ENCODE measurements at regions of chr6 and their contacts with region 1.

Region 1: GRCh38 chr6:147285087-147285855 is 81.1 kb downstream of the STXBP5 start:
- DNase-seq: peak; percentile 48
- H3K4me3 ChIP-seq: no peak overlapping the region
- H3K27ac ChIP-seq: no peak overlapping the region
- H3K4me1 ChIP-seq: no peaks in the 10 kb centered on the region
- H3K27me3 ChIP-seq: no peaks in the 10 kb centered on the region
- CTCF ChIP-seq: peak; percentile 64

Region 2: DNA sequence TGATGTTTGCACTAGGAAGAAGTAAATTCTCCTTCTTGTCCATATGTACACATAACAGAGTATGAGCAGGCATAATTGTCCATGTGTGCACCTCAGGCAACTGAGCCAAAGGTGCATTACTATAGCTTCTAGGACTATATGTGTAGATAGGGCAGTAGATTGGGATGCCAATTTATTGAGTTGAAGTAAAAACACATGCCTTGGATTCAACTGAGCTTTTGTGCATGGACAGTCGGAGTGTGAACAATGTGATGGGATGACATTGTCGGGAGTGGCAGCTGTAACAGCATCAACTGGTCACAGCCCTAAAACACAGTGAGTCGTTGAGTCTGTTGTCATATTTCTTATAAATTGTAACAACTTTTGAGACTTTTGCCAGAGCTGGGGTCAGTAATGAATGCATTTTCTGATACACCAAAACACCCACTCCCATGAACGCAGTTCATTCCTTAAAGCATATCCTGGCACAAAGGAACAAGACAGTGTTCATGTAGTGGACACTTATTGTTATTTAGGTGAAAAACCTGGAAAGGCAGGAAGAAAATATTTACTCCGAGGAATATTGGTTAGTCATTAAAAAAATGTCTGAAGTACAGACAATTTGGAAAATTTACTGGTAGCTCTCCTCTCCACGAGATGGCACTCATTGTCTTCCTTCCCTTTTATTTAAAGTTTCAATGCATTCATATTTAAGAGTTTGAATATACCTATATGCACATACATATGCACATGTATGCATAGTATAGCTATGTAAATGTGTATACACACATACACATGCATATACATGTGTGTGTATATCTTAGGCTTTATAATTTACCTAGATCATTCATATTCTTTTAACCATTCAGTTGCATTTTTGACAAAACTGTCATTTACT is 383.1 kb before region 1 on chr6:
- CTCF ChIA-PET with region 1: no interaction called
- POLR2A ChIA-PET with region 1: no interaction called
- intact Hi-C with region 1: loop called (anchors 2 kb)
- DNase-seq: no peak
- H3K4me3 ChIP-seq: no peak overlapping the region
- H3K27ac ChIP-seq: no peak overlapping the region
- H3K4me1 ChIP-seq: no peaks in the 10 kb centered on the region
- H3K27me3 ChIP-seq: no peaks in the 10 kb centered on the region
- CTCF ChIP-seq: peak; percentile 52

Region 3: GRCh38 chr6:147298461-147298860 is 13.2 kb after region 1 on chr6:
- CTCF ChIA-PET with region 1: no interaction called
- POLR2A ChIA-PET with region 1: no interaction called
- intact Hi-C with region 1: no loop called
- DNase-seq: no peak
- H3K4me3 ChIP-seq: no peak overlapping the region
- H3K27ac ChIP-seq: no peak overlapping the region
- H3K4me1 ChIP-seq: no peaks in the 10 kb centered on the region
- H3K27me3 ChIP-seq: no peaks in the 10 kb centered on the region
- CTCF ChIP-seq: no peak

Measured in A673 (cell line).